Activated T-helper 2 cell treated with anti-CD3 and anti-CD28 coated beads, Interferon-gamma antibody, Interleukin-2, Interleukin-4, amounts not matched to agents 10 μg/mL and 5 μg/mL and 100 μg/mL, durations not matched to agents 14 hours and 24 hours and 36 hours (primary cell): ENCODE measurements at regions of chr17 and their contacts with region 1.

Region 1: DNA sequence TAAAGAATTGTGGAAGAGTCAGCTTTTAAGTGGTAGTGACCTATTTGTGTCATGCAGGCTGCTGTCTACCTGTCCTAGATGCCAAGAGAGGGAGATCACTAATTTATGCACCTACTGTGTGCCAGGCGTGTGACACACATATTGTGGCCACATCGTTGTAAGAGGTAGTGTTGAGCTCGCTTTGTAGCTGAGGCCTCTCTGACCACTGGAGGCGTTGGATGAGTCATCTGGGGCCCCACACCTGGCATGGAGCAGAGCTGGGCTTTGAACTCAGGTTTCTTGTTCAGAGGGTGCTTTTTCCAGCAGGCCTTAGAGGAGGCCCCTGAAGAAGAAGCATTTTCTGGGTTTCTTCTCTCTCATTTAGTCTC is 52.3 kb upstream of the LGALS9 start:
- DNase-seq: peak; percentile 41
- H3K4me3 Mint-ChIP-seq: no peak overlapping the region
- H3K27ac Mint-ChIP-seq: peak overlapping the region; percentile 90
- H3K4me1 Mint-ChIP-seq: peaks cover 68% of the 10 kb centered on the region
- H3K27me3 Mint-ChIP-seq: no peaks in the 10 kb centered on the region

Region 2: GRCh38 chr17:27526604-27527230 is 52.0 kb before region 1 on chr17:
- intact Hi-C with region 1: loop called (anchors 5 kb)
- DNase-seq: peak; percentile 46
- H3K4me3 Mint-ChIP-seq: no peak overlapping the region
- H3K27ac Mint-ChIP-seq: peak overlapping the region; percentile 54
- H3K4me1 Mint-ChIP-seq: peaks cover 63% of the 10 kb centered on the region
- H3K27me3 Mint-ChIP-seq: no peaks in the 10 kb centered on the region